ENCODE measurements at regions of chr7 and their contacts with region 1.

Region 1: GRCh38 chr7:157943561-157943960 is 606.8 kb downstream of the DNAJB6 start:
- DNase-seq: no peak
- ATAC-seq: no peak
- H3K4me3 ChIP-seq: no peak overlapping the region
- H3K27ac ChIP-seq: no peak overlapping the region
- H3K4me1 ChIP-seq: no peaks in the 10 kb centered on the region
- H3K27me3 ChIP-seq: no peaks in the 10 kb centered on the region
- CTCF ChIP-seq: no peak

Region 2: DNA sequence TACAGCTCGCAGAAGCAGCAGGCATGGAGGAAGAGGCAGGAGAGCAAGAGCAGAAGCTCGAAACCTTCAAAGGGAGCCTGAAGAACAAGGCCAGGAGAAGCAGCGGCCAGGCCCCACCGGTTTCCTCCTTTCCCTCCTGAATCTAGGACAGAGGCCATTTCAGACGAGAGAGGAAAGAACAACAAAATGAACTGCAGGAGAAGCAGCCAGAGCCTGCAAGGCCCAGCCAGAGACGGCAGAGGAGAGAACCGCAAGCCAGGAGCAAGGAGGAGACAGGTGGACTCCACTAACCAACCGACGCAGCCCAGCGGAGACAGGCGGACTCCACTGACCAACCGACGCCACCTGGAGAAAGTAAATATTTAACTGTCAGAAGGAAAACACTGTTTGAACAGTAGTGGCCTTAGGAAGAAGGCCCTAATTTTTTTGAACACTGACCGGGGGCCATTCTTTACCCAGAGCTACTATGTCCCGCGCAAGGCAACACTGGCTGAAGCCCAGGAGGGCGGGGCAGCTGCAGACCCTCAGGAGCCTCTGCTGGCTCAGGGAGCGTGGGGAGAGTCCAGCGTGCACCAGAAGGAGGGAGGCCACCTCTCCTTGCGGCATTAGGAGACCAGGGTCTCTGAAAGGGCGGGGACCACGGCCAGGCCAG is 84.9 kb after region 1 on chr7:
- CTCF ChIA-PET with region 1: no interaction called
- POLR2A ChIA-PET with region 1: no interaction called
- in situ Hi-C with region 1: no loop called
- intact Hi-C with region 1: no loop called
- DNase-seq: no peak
- ATAC-seq: no peak
- H3K4me3 ChIP-seq: no peak overlapping the region
- H3K27ac ChIP-seq: no peak overlapping the region
- H3K4me1 ChIP-seq: no peaks in the 10 kb centered on the region
- H3K27me3 ChIP-seq: no peaks in the 10 kb centered on the region; the same call in 1 of the 2 replicates
- CTCF ChIP-seq: no peak

Region 3: DNA sequence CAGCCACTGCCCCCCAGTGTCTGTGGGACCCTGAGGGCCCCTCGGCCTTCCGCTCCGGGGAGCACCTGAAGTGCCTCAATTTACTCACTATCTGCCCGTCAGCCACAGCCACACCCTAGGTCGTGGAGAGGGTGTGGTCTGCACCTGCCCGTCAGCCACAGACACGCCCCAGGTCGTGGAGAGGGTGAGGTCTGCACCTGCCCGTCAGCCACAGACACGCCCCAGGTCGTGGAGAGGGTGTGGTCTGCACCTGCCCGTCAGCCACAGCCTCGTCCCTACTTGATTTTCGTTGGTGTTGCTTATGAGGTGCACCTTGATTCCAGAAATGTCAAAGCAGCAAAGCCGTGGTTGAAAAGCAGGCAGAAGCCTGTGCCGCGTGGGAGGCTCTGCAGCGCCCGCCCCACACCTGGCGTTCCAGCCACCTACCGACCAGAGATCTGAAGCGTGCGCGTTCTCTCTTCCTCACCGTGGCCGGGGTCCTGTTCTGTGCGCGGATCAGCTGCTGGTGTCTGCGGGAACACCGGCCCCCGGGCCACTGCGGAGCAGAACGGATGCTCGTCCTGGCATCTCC is 1014.4 kb after region 1 on chr7:
- CTCF ChIA-PET with region 1: interaction called, 12 read pairs
- POLR2A ChIA-PET with region 1: no interaction called
- in situ Hi-C with region 1: no loop called
- intact Hi-C with region 1: no loop called
- DNase-seq: no peak
- ATAC-seq: peak; percentile 90
- H3K4me3 ChIP-seq: peak overlapping the region; percentile 32 to 59
- H3K27ac ChIP-seq: no peak overlapping the region
- H3K4me1 ChIP-seq: peaks cover 17% of the 10 kb centered on the region
- H3K27me3 ChIP-seq: no peaks in the 10 kb centered on the region; the same call in 1 of the 2 replicates
- CTCF ChIP-seq: no peak

Measured in Panc1 (cell line).